Right lobe of liver (tissue), 6 donors: ENCODE measurements at regions of chr4 and their contacts with region 1.

Region 1: GRCh38 chr4:16264798-16265197 is 38.5 kb upstream of the TAPT1 start:
- DNase-seq: no peak
- ATAC-seq: peak; percentile 83 to 93 (median 86)
- H3K4me3 ChIP-seq: no peak overlapping the region
- H3K27ac ChIP-seq: no peak overlapping the region
- H3K4me1 ChIP-seq: no peaks in the 10 kb centered on the region
- H3K27me3 ChIP-seq: no peaks in the 10 kb centered on the region
- CTCF ChIP-seq: peak; percentile 62 to 70 (median 68)
- POLR2A ChIP-seq: no peak

Region 2: DNA sequence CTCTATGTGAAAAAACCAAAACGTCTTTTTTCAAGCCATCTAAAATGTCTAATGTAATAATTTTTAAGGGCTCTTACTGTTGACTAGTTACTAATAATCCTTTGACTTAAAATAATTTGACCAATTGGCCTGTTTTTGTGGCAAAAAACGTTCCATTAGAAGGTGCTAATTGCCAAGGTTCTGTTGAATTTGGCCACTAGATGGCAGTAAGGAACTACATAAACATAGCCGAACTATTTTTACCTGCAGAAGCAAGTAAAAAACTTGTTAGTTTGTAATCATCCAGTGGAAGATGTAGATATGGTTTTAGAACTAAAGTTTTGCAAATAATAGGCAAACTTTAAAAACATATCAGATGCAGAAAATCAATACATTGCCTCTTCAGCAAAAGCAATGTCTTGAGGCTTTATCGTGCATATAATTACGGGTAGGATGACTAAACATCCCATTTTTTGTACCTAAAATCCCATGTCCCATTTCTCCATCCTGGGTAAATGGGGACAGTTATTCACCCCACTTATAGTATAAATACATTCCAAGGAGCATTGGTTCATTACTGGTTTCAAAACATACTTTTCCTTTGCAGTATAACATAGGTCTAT is 238.5 kb before region 1 on chr4:
- intact Hi-C with region 1: loop called (anchors 5 to 10 kb)
- DNase-seq: no peak
- ATAC-seq: peak; percentile 74 to 81 (median 76)
- H3K4me3 ChIP-seq: no peak overlapping the region
- H3K27ac ChIP-seq: no peak overlapping the region
- H3K4me1 ChIP-seq: peaks cover 0 to 16% (median 8%) of the 10 kb centered on the region in 4 donors
- H3K27me3 ChIP-seq: no peaks in the 10 kb centered on the region
- CTCF ChIP-seq: peak; percentile 77 to 91 (median 86)
- POLR2A ChIP-seq: no peak

Region 3: DNA sequence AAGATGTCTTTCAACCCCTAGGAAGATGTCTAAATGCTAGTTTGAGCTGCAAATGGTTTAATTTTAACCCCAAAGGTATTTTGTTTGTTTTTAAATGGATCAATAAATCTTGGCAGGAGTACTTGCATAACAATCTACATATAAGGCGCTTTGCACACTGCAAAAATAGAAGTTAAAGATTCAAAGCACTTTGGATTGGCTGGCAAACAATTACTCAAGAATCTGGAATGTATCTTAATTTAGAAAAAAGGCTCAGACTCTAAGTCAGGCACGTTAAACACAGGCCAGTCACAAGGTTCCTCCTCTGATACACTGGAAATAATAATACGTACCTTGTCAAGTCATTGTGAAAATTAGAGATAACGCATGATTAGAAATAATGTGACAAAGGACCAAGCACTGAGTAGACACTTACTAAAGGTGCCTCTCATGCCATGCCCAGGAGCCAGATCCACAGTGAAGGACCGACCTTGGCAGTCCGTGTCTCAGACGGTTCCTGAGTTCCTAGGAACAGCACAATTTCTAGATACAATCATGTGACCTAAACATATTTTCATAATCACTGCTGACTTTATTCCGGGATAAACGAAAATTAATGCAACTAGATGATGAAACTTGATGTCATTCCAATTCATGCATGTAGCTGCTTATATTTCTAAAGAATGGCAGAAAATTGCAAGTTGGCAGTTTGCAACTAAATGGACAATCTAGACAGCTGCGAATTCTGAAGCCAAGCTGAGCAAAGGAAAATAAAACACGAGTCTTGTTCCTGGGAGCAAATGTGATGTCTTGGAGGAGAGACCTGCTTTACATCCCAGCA is 230.6 kb before region 1 on chr4:
- intact Hi-C with region 1: loop called (anchors 5 to 10 kb)
- DNase-seq: no peak
- ATAC-seq: peak; percentile 45 to 87 (median 72)
- H3K4me3 ChIP-seq: no peak overlapping the region
- H3K27ac ChIP-seq: peak overlapping the region in 1 of 3 donors; percentile 10
- H3K4me1 ChIP-seq: peaks cover 0 to 14% (median 5%) of the 10 kb centered on the region in 4 donors
- H3K27me3 ChIP-seq: no peaks in the 10 kb centered on the region
- CTCF ChIP-seq: no peak
- POLR2A ChIP-seq: no peak

Region 4: GRCh38 chr4:16205298-16206164 is 59.3 kb before region 1 on chr4:
- intact Hi-C with region 1: loop called in 1 of 2 experiments (anchors 10 kb)
- DNase-seq: no peak
- ATAC-seq: peak; percentile 70 to 81 (median 78)
- H3K4me3 ChIP-seq: no peak overlapping the region
- H3K27ac ChIP-seq: no peak overlapping the region
- H3K4me1 ChIP-seq: peaks cover 0 to 5% (median 0%) of the 10 kb centered on the region in 4 donors
- H3K27me3 ChIP-seq: no peaks in the 10 kb centered on the region
- CTCF ChIP-seq: peak; percentile 45 to 63 (median 54)
- POLR2A ChIP-seq: no peak

Region 5: GRCh38 chr4:16461362-16461761 is 196.6 kb after region 1 on chr4:
- intact Hi-C with region 1: no loop called
- DNase-seq: no peak
- ATAC-seq: no peak
- H3K4me3 ChIP-seq: no peak overlapping the region
- H3K27ac ChIP-seq: no peak overlapping the region
- H3K4me1 ChIP-seq: no peaks in the 10 kb centered on the region
- H3K27me3 ChIP-seq: no peaks in the 10 kb centered on the region
- CTCF ChIP-seq: no peak
- POLR2A ChIP-seq: no peak